Sciatic nerve (tissue), 2 donors: ENCODE measurements at regions of chr3 and their contacts with region 1.

Region 1: DNA sequence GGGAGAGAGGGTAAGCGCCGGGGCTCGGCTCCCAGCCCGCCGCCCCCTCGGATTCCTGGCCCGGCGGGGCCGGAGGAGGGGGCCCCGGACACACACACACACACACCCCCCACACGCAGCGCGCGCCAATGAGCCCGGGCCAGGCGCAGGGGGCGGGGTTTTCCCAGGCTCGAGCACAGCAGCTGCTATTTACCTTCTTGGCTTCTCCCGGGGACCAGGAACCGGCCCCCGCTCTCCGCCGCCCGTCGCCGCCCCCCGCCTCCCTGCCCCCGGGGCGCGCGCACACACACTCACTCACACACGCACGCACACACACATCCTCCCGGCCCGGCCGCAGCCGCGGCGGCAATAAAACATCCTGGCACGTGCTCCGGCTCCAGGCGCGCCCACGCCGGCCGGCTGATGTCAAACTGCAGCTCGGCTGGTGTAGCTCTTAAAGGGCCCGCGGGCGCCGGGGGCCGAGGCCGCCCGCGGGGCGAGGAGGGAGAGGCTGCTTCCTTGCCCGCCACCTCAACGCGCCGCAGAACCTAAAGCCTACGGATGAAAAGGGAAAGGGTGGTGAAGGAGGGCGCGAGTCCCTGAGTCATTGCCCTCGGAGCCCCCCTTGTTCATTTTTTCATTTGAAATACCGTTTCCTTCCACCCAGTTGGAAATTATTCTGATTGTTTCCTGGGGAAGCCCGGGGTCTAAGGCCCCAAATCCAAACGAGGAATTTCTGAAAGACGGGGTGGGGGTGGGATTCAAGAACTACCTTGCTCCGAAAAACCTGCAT is 1.0 kb upstream of the HES1 start:
- DNase-seq: peak; percentile 96
- ATAC-seq: peak; percentile 76

Region 2: GRCh38 chr3:193452338-193452737 is 682.6 kb before region 1 on chr3:
- intact Hi-C with region 1: no loop called
- DNase-seq: no peak
- ATAC-seq: no peak

Region 3: DNA sequence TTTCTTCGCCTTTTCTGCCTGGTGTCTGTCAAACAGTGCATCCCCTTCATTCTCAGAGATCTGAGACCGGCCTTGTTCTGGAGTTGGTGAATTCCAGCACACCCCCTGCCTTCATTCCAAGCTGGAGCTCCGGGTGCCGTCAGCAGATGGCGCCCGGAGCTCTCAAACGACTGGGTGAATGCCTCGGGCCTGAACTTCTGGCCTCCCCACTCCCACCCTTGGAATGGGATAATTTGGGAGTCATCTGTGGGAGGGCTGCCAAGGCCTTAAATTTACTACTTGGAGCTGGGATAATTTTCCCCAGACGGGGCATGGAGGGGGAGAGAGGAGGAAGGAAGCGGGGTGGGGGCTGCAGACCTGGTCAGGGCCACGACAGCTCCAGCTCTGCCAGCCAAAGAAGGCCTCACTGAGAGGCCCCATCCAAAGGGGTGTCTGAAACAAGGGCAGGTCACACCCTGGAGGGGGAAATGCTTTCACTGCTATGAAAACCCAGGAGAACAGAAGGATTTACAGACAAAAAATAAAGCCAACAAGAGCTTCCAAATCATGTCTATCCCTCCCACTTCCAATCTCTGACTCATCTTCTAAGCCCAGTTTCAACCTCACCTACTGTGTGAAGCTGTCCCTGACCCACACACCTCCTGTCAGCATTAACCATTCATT is 354.0 kb before region 1 on chr3:
- intact Hi-C with region 1: loop called (anchors 5 kb)
- DNase-seq: peak; percentile 89
- ATAC-seq: peak; percentile 95

Region 4: DNA sequence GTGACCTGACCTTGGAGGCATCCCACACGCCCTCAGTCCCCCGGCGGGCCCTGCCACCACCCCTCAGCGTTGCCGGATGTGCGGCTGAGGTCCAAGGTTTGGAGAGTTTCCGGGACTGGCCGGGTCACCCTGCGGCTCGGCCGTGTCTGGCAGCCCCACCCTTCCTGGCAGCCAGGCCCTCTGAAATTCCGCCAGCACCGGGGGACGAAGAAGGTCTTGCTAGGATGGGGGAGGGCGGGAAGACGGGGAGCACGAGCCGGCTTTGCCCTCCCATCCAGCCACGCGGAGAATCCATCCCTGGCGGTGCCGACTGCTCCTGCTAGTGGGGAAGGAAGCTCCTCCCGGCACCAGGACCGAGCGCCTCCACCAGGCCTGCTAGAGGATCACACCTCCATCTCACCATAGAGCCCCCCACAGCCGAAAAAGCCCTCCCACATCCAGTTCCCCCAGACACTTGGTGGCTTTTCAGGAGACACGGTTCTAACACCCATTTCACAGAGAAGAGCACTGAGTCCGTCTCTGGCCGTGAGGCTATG is 134.7 kb after region 1 on chr3:
- intact Hi-C with region 1: loop called (anchors 5 kb)
- DNase-seq: peak; percentile 91
- ATAC-seq: peak; percentile 21

Region 5: DNA sequence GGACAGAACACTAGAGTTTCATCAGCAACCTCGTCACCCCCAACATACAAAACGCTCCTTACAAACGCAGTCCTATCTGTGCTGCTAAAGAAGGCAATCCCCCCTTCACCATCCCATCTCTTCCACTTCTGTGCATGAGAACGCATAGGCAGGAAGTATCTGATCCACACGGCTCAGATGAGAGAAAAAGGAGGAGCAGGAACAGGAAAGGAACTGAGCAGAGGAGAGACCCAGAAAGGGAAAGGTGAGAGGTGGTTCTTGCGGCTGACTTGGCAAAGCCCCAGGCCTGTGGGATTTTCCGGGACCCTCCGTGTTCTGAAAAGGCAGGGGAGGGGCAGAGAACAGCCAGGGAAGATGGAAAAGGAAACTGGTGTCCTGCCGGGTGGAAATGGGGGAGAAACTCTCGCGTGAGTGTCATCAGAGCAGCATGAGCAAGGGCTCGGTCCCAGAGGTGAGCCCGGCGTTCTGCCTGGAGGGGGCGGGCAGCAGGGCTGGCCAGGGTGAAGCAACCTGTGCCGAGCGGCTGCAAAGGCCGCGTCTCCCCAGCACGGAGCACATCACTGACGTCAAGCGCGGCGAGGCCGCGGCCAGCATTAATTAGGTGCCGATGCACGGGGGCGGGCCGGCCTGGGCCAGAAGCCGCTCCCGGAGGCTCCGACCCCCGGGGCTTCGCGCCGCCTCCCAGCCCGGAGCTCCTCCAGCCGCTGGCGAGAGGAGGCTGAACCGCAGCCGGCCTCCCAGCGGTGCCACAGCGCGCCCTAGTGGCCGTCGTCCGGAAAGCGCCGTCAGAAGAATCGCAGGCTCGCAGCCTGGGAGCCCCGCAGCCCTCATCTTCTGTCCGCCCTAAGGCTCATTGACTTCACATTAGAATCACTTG is 180.4 kb after region 1 on chr3:
- intact Hi-C with region 1: loop called (anchors 5 kb)
- DNase-seq: peak; percentile 95
- ATAC-seq: peak; percentile 84